OCI-LY7 (cell line): ENCODE measurements at regions of chr1 and their contacts with region 1.

Region 1: DNA sequence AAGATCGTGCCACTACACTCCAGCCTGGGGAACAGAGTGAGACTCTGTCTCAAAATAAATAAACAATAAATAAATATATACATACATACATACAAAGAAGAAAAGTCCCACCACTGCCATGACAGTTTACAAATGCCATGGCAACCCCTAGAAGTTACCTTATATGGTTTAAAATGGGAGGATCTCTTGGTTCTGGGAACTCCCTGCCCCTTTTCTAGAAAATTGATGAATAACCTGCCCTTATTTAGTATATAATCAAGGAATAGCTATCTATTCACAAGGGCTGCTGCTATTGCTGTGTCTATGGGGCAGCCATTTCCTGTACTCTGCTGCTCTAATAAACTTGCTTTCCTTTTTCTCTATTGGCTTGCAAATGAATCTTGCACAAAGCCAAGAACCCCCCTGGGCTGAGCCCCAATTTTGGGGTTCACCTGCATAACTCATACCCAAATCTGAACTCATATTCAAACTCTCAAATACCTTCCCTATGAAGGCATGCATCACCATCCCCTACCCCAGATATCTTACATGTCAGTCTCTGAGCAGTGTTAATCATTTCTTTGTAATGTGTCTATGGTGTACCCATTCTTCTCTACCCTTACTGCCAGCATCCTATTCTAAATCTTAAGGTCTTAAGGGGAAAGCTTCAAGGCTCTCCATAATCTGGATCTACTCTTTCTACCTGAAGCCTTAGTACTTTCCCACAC is 9.0 kb downstream of the GON4L start:
- DNase-seq: no peak
- H3K4me3 ChIP-seq: no peak overlapping the region
- H3K27ac ChIP-seq: peak overlapping the region; percentile 1
- H3K4me1 ChIP-seq: peaks cover 42% of the 10 kb centered on the region
- CTCF ChIP-seq: no peak

Region 2: DNA sequence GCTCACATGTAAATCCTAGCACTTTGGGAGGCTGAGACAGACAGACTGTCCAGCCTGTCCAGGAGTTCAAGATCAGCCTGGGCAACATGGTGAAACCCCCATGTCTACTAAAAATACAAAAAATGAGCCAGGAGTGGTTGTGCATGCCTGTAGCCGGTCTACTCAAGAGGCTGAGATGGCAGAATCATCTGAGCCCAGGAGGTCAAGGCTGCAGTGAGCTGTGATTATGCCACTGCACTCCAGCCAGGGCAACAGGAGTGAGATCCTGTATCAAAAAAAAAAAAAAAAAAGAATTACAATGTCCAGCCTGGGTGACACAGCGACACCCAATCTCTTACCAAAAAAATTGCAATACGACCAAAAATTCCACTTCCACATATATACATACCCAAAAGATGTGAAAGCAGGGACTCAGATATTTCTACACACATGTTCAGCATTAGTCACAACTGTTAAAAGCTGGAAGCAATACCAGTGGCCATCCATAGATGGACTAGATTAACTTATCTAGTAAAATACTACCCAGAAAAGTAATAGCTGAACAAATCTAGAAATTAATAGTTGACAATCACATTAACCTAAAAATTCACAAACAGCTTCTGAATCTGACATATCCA is 334.6 kb before region 1 on chr1:
- CTCF ChIA-PET with region 1: no interaction called
- POLR2A ChIA-PET with region 1: no interaction called
- intact Hi-C with region 1: no loop called
- DNase-seq: no peak
- H3K4me3 ChIP-seq: no peak overlapping the region
- H3K27ac ChIP-seq: no peak overlapping the region
- H3K4me1 ChIP-seq: peaks cover 5% of the 10 kb centered on the region
- CTCF ChIP-seq: no peak

Region 3: GRCh38 chr1:155529929-155530328 is 318.0 kb before region 1 on chr1:
- CTCF ChIA-PET with region 1: no interaction called
- POLR2A ChIA-PET with region 1: no interaction called
- intact Hi-C with region 1: no loop called
- DNase-seq: peak; percentile 73
- H3K4me3 ChIP-seq: peak overlapping the region; percentile 54
- H3K27ac ChIP-seq: peak overlapping the region; percentile 70
- H3K4me1 ChIP-seq: peaks cover 46% of the 10 kb centered on the region
- CTCF ChIP-seq: no peak

Region 4: GRCh38 chr1:155741908-155742307 is 106.1 kb before region 1 on chr1:
- CTCF ChIA-PET with region 1: no interaction called
- POLR2A ChIA-PET with region 1: no interaction called
- intact Hi-C with region 1: no loop called
- DNase-seq: no peak
- H3K4me3 ChIP-seq: no peak overlapping the region
- H3K27ac ChIP-seq: no peak overlapping the region
- H3K4me1 ChIP-seq: peaks cover 10% of the 10 kb centered on the region
- CTCF ChIP-seq: no peak

Region 5: DNA sequence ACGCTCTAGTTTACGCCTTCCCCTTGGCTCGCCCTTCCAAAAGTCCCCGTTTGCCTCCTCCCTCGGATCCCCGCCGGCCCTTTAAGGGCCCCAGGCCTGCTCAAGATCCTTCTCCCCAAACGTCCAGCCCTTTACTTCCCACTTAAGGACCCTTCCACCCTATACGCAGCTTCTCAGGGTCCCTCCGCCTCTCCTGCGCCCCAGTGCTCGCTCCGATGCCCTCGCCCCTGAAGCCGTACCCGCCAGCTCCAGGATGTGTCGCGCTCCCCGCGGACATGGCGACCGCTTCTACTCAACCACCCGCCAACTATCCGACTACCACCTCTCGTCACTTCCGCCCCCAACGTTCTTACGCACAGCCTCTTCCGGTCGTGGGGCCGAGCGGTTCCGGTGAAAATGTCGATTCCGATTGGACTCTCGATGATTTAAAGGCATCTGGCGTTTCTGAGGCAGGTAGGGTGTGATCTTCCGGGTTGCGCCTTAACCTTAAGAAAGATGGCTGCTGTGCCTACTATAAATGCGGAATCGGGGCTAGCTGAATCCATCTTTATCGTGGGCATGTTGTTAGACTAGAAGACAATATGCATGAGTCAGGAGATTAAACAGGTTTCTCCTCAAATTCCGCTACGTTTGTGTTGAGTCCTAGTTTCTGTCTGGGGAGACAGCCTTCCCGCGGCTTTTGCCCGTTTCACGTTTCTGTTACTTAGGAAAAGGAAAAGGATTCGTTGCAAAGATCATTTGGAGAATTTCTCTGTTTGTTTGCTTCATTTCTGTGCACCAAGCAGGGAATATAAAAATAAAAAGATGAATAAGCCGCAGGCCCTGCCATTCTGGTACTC is 86.3 kb after region 1 on chr1 and contains the start of gene KHDC4:
- CTCF ChIA-PET with region 1: no interaction called
- POLR2A ChIA-PET with region 1: no interaction called
- intact Hi-C with region 1: no loop called
- DNase-seq: peak; percentile 99
- H3K4me3 ChIP-seq: peak within 1 kb of the TSS; percentile 87
- H3K27ac ChIP-seq: peak within 1 kb of the TSS; percentile 82
- H3K4me1 ChIP-seq: peaks cover 52% of the 10 kb centered on the region
- CTCF ChIP-seq: no peak; the same call in 1 of the 2 replicates
- total RNA-seq, gene KHDC4: 84.6 and 88.9 TPM in 2 replicates

Region 6: DNA sequence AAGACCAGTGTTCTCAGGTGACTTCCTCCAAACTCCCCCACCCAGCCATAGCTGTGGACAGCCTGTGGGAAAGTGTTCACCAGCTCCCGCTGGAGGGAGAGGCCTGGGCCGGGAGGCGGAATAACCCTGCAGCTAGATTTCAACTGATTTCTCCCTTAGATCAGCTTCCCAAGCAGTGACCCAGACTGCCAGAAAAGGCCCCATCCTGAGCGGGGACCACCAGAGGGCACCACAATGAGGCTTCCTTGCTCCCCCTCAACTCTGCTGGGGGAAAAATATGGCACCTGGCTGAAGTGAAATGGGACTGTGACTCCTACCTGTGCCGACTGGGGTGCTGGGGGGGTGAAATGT is 571.9 kb after region 1 on chr1:
- CTCF ChIA-PET with region 1: interaction called, 10 read pairs
- POLR2A ChIA-PET with region 1: no interaction called
- intact Hi-C with region 1: no loop called
- DNase-seq: peak; percentile 44
- H3K4me3 ChIP-seq: peak overlapping the region; percentile 18
- H3K27ac ChIP-seq: no peak overlapping the region
- H3K4me1 ChIP-seq: peaks cover 16% of the 10 kb centered on the region
- CTCF ChIP-seq: peak; percentile 72